ENCODE measurements at regions of chr10 and their contacts with region 1.

Region 1: GRCh38 chr10:7035126-7035761 is 375.6 kb downstream of the SFMBT2 start:
- DNase-seq: peak in 4 of 9 experiments; percentile 19 to 50 (median 42)
- ATAC-seq: peak; percentile 63
- H3K4me3 ChIP-seq: no peak overlapping the region
- H3K4me3 Mint-ChIP-seq: no peak overlapping the region
- H3K27ac ChIP-seq: no peak overlapping the region
- H3K27ac Mint-ChIP-seq: peak overlapping the region; percentile 60
- H3K4me1 ChIP-seq: peaks cover 20% of the 10 kb centered on the region
- H3K4me1 Mint-ChIP-seq: peaks cover 33% of the 10 kb centered on the region
- H3K27me3 ChIP-seq: no peaks in the 10 kb centered on the region
- H3K27me3 Mint-ChIP-seq: no peaks in the 10 kb centered on the region
- CTCF ChIP-seq: no peak

Region 2: GRCh38 chr10:6972226-6972625 is 63.0 kb before region 1 on chr10:
- CTCF ChIA-PET with region 1: no interaction called
- POLR2A ChIA-PET with region 1: no interaction called
- intact Hi-C with region 1: no loop called
- DNase-seq: no peak
- ATAC-seq: no peak
- H3K4me3 ChIP-seq: no peak overlapping the region
- H3K4me3 Mint-ChIP-seq: no peak overlapping the region
- H3K27ac ChIP-seq: no peak overlapping the region
- H3K27ac Mint-ChIP-seq: no peak overlapping the region
- H3K4me1 ChIP-seq: no peaks in the 10 kb centered on the region
- H3K4me1 Mint-ChIP-seq: peaks cover 13% of the 10 kb centered on the region
- H3K27me3 ChIP-seq: no peaks in the 10 kb centered on the region
- H3K27me3 Mint-ChIP-seq: peaks cover 4% of the 10 kb centered on the region
- CTCF ChIP-seq: no peak

Region 3: DNA sequence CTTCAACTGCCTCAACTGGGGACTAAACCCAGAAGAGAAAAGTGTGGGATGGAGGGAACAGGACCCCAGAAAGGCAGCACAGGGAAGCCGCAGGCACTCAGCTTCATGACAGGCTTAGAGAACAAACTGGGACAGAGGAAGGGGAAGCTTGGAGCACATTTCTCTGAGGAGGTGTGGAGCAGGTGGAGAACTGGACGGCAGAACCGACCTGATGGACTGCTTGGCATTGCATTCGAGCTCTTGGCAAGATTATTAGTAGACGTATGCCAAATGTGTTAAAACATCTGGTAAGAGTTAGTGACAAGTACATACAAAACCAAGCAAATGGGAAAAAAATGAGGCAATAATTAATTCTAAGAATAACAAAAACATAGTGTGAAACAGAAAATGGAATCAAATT is 39.9 kb after region 1 on chr10:
- CTCF ChIA-PET with region 1: no interaction called
- POLR2A ChIA-PET with region 1: no interaction called
- intact Hi-C with region 1: no loop called
- DNase-seq: no peak
- ATAC-seq: no peak
- H3K4me3 ChIP-seq: no peak overlapping the region
- H3K4me3 Mint-ChIP-seq: no peak overlapping the region
- H3K27ac ChIP-seq: no peak overlapping the region
- H3K27ac Mint-ChIP-seq: no peak overlapping the region
- H3K4me1 ChIP-seq: no peaks in the 10 kb centered on the region
- H3K4me1 Mint-ChIP-seq: no peaks in the 10 kb centered on the region
- H3K27me3 ChIP-seq: no peaks in the 10 kb centered on the region
- H3K27me3 Mint-ChIP-seq: no peaks in the 10 kb centered on the region
- CTCF ChIP-seq: no peak

Region 4: DNA sequence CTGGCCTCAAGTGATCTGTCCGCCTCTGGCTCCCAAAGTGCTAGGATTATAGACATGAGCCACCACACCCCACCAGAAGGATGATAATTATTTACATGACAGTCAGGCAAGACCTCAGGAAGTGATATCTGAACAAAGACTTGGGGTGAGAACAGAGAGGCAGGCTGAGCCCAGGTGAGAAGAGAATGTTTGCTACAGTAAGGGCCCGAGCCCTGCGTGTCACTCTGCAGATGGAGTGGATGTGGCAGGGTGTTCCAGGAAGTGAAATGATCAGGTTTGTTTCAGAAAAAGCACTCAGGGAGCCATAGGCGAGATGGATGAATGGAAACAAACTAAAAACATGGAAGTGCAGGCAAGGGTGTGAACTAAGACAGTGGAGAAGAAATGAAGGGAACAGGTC is 353.4 kb after region 1 on chr10:
- CTCF ChIA-PET with region 1: no interaction called
- POLR2A ChIA-PET with region 1: no interaction called
- intact Hi-C with region 1: loop called in 1 of 2 experiments (anchors 10 kb)
- DNase-seq: peak in 6 of 9 experiments; percentile 28 to 64 (median 46)
- ATAC-seq: peak; percentile 78
- H3K4me3 ChIP-seq: no peak overlapping the region
- H3K4me3 Mint-ChIP-seq: peak overlapping the region; percentile 72
- H3K27ac ChIP-seq: peak overlapping the region; percentile 21 to 55
- H3K27ac Mint-ChIP-seq: peak overlapping the region; percentile 92
- H3K4me1 ChIP-seq: peaks cover 35% of the 10 kb centered on the region
- H3K4me1 Mint-ChIP-seq: peaks cover 65% of the 10 kb centered on the region
- H3K27me3 ChIP-seq: no peaks in the 10 kb centered on the region
- H3K27me3 Mint-ChIP-seq: no peaks in the 10 kb centered on the region
- CTCF ChIP-seq: no peak

Measured in CD8-positive, alpha-beta T cell (primary cell).